ENCODE measurements at regions of chr3 and their contacts with region 1.

Region 1: GRCh38 chr3:100254168-100254777 is 6.5 kb upstream of the TBC1D23 start:
- DNase-seq: no peak
- ATAC-seq: peak; percentile 76
- H3K4me3 Mint-ChIP-seq: no peak overlapping the region
- H3K27ac Mint-ChIP-seq: no peak overlapping the region
- H3K4me1 Mint-ChIP-seq: no peaks in the 10 kb centered on the region
- H3K27me3 Mint-ChIP-seq: no peaks in the 10 kb centered on the region
- CTCF ChIP-seq: no peak

Region 2: DNA sequence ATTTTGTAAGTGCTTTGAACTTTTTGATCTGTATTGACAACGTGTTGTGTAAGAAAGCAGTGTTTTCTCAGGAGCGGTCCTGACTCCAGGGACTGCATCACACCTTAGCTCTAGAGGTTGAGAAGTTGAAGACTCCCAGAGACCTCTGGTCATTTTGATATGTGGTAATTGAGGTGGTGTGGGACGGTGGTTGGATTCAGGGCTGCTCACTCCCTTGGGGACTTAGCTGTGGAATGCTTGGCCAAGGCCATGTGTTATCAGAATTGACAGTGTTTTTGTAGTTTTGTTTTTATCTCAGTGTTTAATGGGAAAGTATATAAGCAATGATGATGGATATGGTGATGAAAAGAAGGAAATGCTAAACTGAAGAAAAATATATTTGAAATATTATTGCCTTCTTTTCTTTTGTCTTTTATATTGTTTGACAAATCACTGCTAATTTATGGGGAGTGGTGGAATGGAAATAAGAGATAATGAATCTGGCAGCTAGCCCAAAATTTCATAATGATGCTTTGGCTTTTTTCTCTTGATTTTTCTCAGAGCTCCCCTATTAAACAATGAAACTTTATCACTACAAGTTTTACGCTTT is 420.6 kb before region 1 on chr3:
- CTCF ChIA-PET with region 1: interaction called, 76 read pairs
- POLR2A ChIA-PET with region 1: interaction called, 6 read pairs
- intact Hi-C with region 1: loop called (anchors 1 kb)
- DNase-seq: no peak
- ATAC-seq: no peak
- H3K4me3 Mint-ChIP-seq: no peak overlapping the region
- H3K27ac Mint-ChIP-seq: no peak overlapping the region
- H3K4me1 Mint-ChIP-seq: no peaks in the 10 kb centered on the region
- H3K27me3 Mint-ChIP-seq: no peaks in the 10 kb centered on the region
- CTCF ChIP-seq: no peak

Region 3: DNA sequence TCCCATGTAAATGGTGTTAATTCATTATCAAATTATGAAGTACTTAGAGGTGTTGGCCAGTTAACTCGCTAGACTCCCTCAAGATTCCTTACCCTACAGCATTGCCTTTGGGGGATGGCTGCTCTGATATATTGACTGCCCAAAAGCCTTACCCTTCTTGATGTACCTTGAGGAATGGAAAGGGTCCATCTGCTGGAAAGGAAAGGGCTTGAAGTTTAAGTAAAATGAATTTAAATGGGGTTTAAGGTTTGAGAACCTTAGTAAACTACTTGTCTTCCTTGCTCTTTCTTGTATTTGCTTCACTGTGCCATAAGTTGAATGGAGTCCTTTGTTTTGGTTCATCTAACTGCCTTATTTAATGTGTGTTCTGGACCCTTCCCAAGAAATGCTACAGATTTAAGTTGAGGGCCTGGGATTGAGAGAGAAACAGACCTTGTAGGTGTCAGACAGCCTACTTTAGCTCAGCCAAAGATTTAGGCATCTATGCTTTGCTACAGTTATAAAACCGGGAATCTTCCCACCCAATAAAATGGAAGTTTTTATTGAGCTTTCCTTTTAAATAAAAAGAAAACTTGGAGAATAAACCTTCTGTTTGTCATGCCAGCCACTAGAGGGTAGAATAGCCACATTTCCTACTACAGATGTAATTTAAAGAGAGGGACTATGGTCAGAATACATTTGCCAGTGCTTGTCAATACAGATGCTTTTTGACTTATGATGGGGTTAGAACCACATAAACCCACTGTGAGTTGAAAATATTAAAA is 411.3 kb before region 1 on chr3:
- CTCF ChIA-PET with region 1: interaction called, 72 read pairs
- POLR2A ChIA-PET with region 1: no interaction called
- intact Hi-C with region 1: loop called (anchors 1 kb)
- DNase-seq: no peak
- ATAC-seq: peak; percentile 37
- H3K4me3 Mint-ChIP-seq: no peak overlapping the region
- H3K27ac Mint-ChIP-seq: no peak overlapping the region
- H3K4me1 Mint-ChIP-seq: peaks cover 21% of the 10 kb centered on the region
- H3K27me3 Mint-ChIP-seq: no peaks in the 10 kb centered on the region
- CTCF ChIP-seq: no peak

Region 4: GRCh38 chr3:99875929-99876841 is 378.1 kb before region 1 on chr3:
- CTCF ChIA-PET with region 1: interaction called, 4 read pairs
- POLR2A ChIA-PET with region 1: no interaction called
- intact Hi-C with region 1: loop called (anchors 1 kb)
- DNase-seq: peak; percentile 69
- ATAC-seq: peak; percentile 98
- H3K4me3 Mint-ChIP-seq: peak overlapping the region; percentile 81
- H3K27ac Mint-ChIP-seq: peak overlapping the region; percentile 39
- H3K4me1 Mint-ChIP-seq: peaks cover 26% of the 10 kb centered on the region
- H3K27me3 Mint-ChIP-seq: no peaks in the 10 kb centered on the region
- CTCF ChIP-seq: no peak

Region 5: DNA sequence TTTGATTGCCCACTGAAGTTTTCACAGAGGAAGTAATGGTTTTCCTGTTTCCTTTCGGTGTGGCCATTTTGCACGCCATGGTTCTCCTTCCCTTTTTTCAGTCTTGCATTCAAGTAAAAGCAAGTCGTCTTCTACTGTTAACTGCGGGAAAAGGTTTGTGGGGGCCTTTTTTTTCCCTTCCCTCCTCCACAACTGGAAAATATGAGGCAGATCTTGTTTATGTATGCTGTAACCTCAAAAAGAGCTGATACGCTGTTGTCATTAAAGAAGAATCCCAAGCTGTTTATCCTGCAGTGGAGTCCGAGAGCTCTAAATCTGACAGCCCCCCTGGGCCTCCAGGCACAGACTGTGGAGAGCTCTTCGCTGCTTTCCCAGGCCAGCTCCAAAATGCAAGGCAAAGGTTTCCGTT is 180.4 kb before region 1 on chr3:
- CTCF ChIA-PET with region 1: interaction called, 47 read pairs
- POLR2A ChIA-PET with region 1: interaction called, 4 read pairs
- intact Hi-C with region 1: no loop called
- DNase-seq: no peak
- ATAC-seq: peak; percentile 11
- H3K4me3 Mint-ChIP-seq: peak overlapping the region; percentile 81
- H3K27ac Mint-ChIP-seq: peak overlapping the region; percentile 86
- H3K4me1 Mint-ChIP-seq: peaks cover 41% of the 10 kb centered on the region
- H3K27me3 Mint-ChIP-seq: no peaks in the 10 kb centered on the region
- CTCF ChIP-seq: no peak

Region 6: GRCh38 chr3:100205171-100205570 is 49.1 kb before region 1 on chr3:
- CTCF ChIA-PET with region 1: no interaction called
- POLR2A ChIA-PET with region 1: no interaction called
- intact Hi-C with region 1: no loop called
- DNase-seq: no peak
- ATAC-seq: no peak
- H3K4me3 Mint-ChIP-seq: no peak overlapping the region
- H3K27ac Mint-ChIP-seq: no peak overlapping the region
- H3K4me1 Mint-ChIP-seq: peaks cover 5% of the 10 kb centered on the region
- H3K27me3 Mint-ChIP-seq: no peaks in the 10 kb centered on the region
- CTCF ChIP-seq: no peak

Measured in activated B cell treated with CpG ODN at 0.5 μM for 24 hours (primary cell).